Prostate gland (tissue), 2 donors: ENCODE measurements at regions of chr7 and their contacts with region 1.

Region 1: GRCh38 chr7:18623389-18623788 is 127.8 kb downstream of the HDAC9 start:
- DNase-seq: no peak
- H3K4me3 ChIP-seq: no peak overlapping the region
- H3K27ac ChIP-seq: no peak overlapping the region
- H3K4me1 ChIP-seq: no peaks in the 10 kb centered on the region
- H3K27me3 ChIP-seq: no peaks in the 10 kb centered on the region
- CTCF ChIP-seq: no peak
- POLR2A ChIP-seq: no peak

Region 2: GRCh38 chr7:18679261-18679660 is 55.9 kb after region 1 on chr7:
- intact Hi-C with region 1: loop called (anchors 2 kb)
- DNase-seq: no peak
- H3K4me3 ChIP-seq: no peak overlapping the region
- H3K27ac ChIP-seq: no peak overlapping the region
- H3K4me1 ChIP-seq: no peaks in the 10 kb centered on the region
- H3K27me3 ChIP-seq: no peaks in the 10 kb centered on the region
- CTCF ChIP-seq: no peak
- POLR2A ChIP-seq: no peak

Region 3: GRCh38 chr7:18762189-18762588 is 138.8 kb after region 1 on chr7:
- intact Hi-C with region 1: no loop called
- DNase-seq: no peak
- H3K4me3 ChIP-seq: no peak overlapping the region
- H3K27ac ChIP-seq: no peak overlapping the region
- H3K4me1 ChIP-seq: no peaks in the 10 kb centered on the region
- H3K27me3 ChIP-seq: no peaks in the 10 kb centered on the region
- CTCF ChIP-seq: no peak
- POLR2A ChIP-seq: no peak